CD4-positive, alpha-beta T cell (primary cell): ENCODE measurements at regions of chr4 and their contacts with region 1.

Region 1: GRCh38 chr4:151029537-151029936 is 14.5 kb upstream of the LRBA start:
- DNase-seq: no peak
- ATAC-seq: no peak
- H3K4me3 ChIP-seq: no peak overlapping the region
- H3K4me3 Mint-ChIP-seq: no peak overlapping the region
- H3K27ac ChIP-seq: no peak overlapping the region
- H3K27ac Mint-ChIP-seq: no peak overlapping the region
- H3K4me1 ChIP-seq: peaks cover 4% of the 10 kb centered on the region
- H3K4me1 Mint-ChIP-seq: peaks cover 14% of the 10 kb centered on the region
- H3K27me3 ChIP-seq: no peaks in the 10 kb centered on the region
- H3K27me3 Mint-ChIP-seq: no peaks in the 10 kb centered on the region
- CTCF ChIP-seq: no peak

Region 2: DNA sequence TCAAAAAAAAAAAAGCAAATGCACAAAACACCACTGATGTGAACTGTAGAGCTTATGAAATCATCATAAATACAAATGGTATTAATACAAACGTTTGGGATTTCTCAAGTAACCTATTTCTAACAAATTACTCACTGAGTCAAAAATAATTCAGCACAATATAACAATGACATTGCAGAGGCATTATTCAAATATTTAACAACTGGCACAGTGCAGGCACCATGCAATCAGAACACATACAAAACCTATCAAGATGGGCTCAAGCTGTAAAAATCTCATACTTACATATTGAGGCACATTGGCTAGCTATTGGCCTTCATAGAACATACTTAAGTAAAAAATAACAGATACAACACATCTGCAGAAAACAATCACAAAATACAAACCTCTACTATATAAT is 95.5 kb before region 1 on chr4:
- CTCF ChIA-PET with region 1: no interaction called
- POLR2A ChIA-PET with region 1: no interaction called
- intact Hi-C with region 1: loop called in 1 of 2 experiments (anchors 5 kb)
- DNase-seq: no peak
- ATAC-seq: no peak
- H3K4me3 ChIP-seq: no peak overlapping the region
- H3K4me3 Mint-ChIP-seq: no peak overlapping the region
- H3K27ac ChIP-seq: no peak overlapping the region
- H3K27ac Mint-ChIP-seq: no peak overlapping the region
- H3K4me1 ChIP-seq: no peaks in the 10 kb centered on the region
- H3K4me1 Mint-ChIP-seq: peaks cover 34% of the 10 kb centered on the region
- H3K27me3 ChIP-seq: no peaks in the 10 kb centered on the region
- H3K27me3 Mint-ChIP-seq: no peaks in the 10 kb centered on the region
- CTCF ChIP-seq: no peak

Region 3: GRCh38 chr4:151004222-151004621 is 25.3 kb before region 1 on chr4:
- CTCF ChIA-PET with region 1: no interaction called
- POLR2A ChIA-PET with region 1: no interaction called
- intact Hi-C with region 1: no loop called
- DNase-seq: no peak
- ATAC-seq: no peak
- H3K4me3 ChIP-seq: no peak overlapping the region
- H3K4me3 Mint-ChIP-seq: no peak overlapping the region
- H3K27ac ChIP-seq: no peak overlapping the region
- H3K27ac Mint-ChIP-seq: no peak overlapping the region
- H3K4me1 ChIP-seq: peaks cover 18% of the 10 kb centered on the region
- H3K4me1 Mint-ChIP-seq: peaks cover 49% of the 10 kb centered on the region
- H3K27me3 ChIP-seq: no peaks in the 10 kb centered on the region
- H3K27me3 Mint-ChIP-seq: no peaks in the 10 kb centered on the region
- CTCF ChIP-seq: no peak